ENCODE measurements at regions of chr11 and their contacts with region 1.

Region 1: GRCh38 chr11:72598906-72599305 is 75.3 kb downstream of the PDE2A start:
- DNase-seq: peak; percentile 55
- H3K4me3 ChIP-seq: no peak overlapping the region
- H3K27ac ChIP-seq: no peak overlapping the region
- H3K4me1 ChIP-seq: peaks cover 9% of the 10 kb centered on the region
- H3K27me3 ChIP-seq: no peaks in the 10 kb centered on the region
- CTCF ChIP-seq: peak; percentile 77

Region 2: DNA sequence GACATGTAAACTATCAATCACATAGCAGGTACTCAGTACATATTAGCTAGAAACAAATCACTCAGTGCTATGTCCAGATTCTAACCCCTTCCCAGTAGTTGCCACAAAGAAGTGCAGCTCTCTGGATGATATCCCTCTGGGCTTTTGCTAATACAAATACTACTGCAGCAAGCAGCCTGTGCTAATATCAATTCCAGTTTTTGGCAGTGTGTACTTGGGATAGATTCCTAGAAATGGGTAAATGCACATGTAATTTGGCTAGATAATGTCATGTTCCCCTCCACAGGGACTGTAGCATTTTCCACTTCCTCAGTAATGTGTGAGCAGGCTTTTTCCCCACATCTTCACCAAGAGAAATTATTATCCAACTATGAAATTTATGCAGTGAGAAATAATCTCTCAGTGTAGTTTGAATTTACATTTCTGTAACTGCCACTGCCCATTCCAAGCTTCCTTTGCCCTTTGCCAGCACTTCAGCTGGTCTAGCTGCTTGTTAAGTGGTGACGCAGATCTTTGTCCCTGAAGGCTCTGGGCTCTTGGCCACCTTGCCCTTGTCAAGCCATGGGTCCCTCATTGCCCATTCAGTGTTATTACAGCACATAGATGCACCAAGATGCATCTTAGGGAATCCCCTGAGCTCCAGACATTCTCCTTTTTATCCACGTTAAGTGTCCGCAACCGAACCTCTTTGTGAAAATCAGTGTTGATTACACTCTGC is 57.5 kb before region 1 on chr11:
- intact Hi-C with region 1: no loop called
- DNase-seq: no peak
- H3K4me3 ChIP-seq: no peak overlapping the region
- H3K27ac ChIP-seq: no peak overlapping the region
- H3K4me1 ChIP-seq: no peaks in the 10 kb centered on the region
- H3K27me3 ChIP-seq: peaks cover 67% of the 10 kb centered on the region
- CTCF ChIP-seq: no peak

Region 3: DNA sequence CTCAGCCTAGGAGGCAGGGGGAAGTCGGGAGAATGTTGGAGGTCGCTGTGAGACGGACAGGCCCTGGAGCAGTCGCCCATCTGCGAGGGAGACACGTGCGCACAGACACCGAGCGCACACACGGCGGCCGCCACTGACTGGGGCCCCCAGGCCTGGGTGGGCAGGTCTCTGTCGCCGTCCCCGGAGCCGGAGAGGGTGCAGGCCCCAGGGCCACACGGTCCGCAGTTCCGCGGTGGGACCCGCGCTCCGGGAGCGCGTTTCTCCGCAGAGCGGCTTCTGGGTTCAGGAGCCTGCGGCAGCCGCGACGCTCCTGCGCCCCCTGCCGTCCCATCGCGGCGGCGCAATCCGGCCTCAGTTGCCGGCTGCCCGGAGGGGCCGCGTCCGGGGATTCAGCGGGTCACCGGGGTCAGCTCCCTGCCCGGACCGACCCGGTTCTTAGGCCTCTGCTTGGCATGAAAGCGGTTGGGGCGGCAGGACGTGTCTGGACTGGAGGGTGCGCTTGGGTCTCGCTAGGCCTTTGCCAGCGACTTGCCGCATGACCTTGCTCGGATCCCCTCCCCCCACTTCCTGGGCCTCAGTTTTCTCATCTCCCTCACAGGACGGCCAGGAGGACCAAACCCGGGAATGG is 44.1 kb after region 1 on chr11:
- intact Hi-C with region 1: loop called (anchors 5 kb)
- DNase-seq: peak; percentile 64
- H3K4me3 ChIP-seq: peak overlapping the region; percentile 88
- H3K27ac ChIP-seq: peak overlapping the region; percentile 87
- H3K4me1 ChIP-seq: peaks cover 46% of the 10 kb centered on the region
- H3K27me3 ChIP-seq: no peaks in the 10 kb centered on the region
- CTCF ChIP-seq: peak; percentile 99

Measured in left ventricle myocardium inferior (tissue), 1 donor.